Natural killer cell (primary cell): ENCODE measurements at regions of chr22 and their contacts with region 1.

Region 1: GRCh38 chr22:40243891-40244290 is 66.2 kb downstream of the TNRC6B start:
- DNase-seq: peak in 1 of 2 donors; percentile 64
- ATAC-seq: no peak
- H3K4me3 ChIP-seq: no peak overlapping the region
- H3K4me3 Mint-ChIP-seq: peak overlapping the region; percentile 81
- H3K27ac ChIP-seq: no peak overlapping the region
- H3K27ac Mint-ChIP-seq: peak overlapping the region in 1 of 2 donors; percentile 73
- H3K4me1 ChIP-seq: peaks cover 65% of the 10 kb centered on the region
- H3K4me1 Mint-ChIP-seq: peaks cover 65 to 84% of the 10 kb centered on the region in 2 donors
- H3K27me3 ChIP-seq: no peaks in the 10 kb centered on the region
- H3K27me3 Mint-ChIP-seq: no peaks in the 10 kb centered on the region
- CTCF ChIP-seq: no peak

Region 2: GRCh38 chr22:39994566-39995392 is 249.1 kb before region 1 on chr22 and contains the start of gene FAM83F:
- intact Hi-C with region 1: no loop called
- DNase-seq: peak; percentile 25 to 59
- ATAC-seq: peak; percentile 69 to 78 (median 74)
- H3K4me3 ChIP-seq: no peak within 1 kb of the TSS
- H3K4me3 Mint-ChIP-seq: peak within 1 kb of the TSS; percentile 43
- H3K27ac ChIP-seq: no peak within 1 kb of the TSS
- H3K27ac Mint-ChIP-seq: peak within 1 kb of the TSS in 1 of 2 donors; percentile 27
- H3K4me1 ChIP-seq: peaks cover 9% of the 10 kb centered on the region
- H3K4me1 Mint-ChIP-seq: peaks cover 7 to 9% of the 10 kb centered on the region in 2 donors
- H3K27me3 ChIP-seq: peaks cover 12% of the 10 kb centered on the region
- H3K27me3 Mint-ChIP-seq: peaks cover 28 to 48% of the 10 kb centered on the region in 2 donors
- CTCF ChIP-seq: no peak
- total RNA-seq, gene FAM83F: 1.0 to 7.5 TPM in 2 of 3 donors, not detected in the other

Region 3: GRCh38 chr22:40044102-40044869 is 199.6 kb before region 1 on chr22:
- intact Hi-C with region 1: loop called (anchors 5 kb)
- DNase-seq: peak; percentile 98 to 99
- ATAC-seq: peak; percentile 82 to 92 (median 85)
- H3K4me3 ChIP-seq: peak overlapping the region; percentile 59
- H3K4me3 Mint-ChIP-seq: peak overlapping the region; percentile 97
- H3K27ac ChIP-seq: peak overlapping the region; percentile 87
- H3K27ac Mint-ChIP-seq: peak overlapping the region; percentile 97 to 99
- H3K4me1 ChIP-seq: peaks cover 21% of the 10 kb centered on the region
- H3K4me1 Mint-ChIP-seq: peaks cover 35 to 36% of the 10 kb centered on the region in 2 donors
- H3K27me3 ChIP-seq: no peaks in the 10 kb centered on the region
- H3K27me3 Mint-ChIP-seq: peaks cover 9 to 13% of the 10 kb centered on the region in 2 donors
- CTCF ChIP-seq: no peak

Region 4: GRCh38 chr22:40084246-40084645 is 159.6 kb before region 1 on chr22:
- intact Hi-C with region 1: no loop called
- DNase-seq: no peak
- ATAC-seq: no peak
- H3K4me3 ChIP-seq: no peak overlapping the region
- H3K4me3 Mint-ChIP-seq: no peak overlapping the region
- H3K27ac ChIP-seq: no peak overlapping the region
- H3K27ac Mint-ChIP-seq: no peak overlapping the region
- H3K4me1 ChIP-seq: peaks cover 17% of the 10 kb centered on the region
- H3K4me1 Mint-ChIP-seq: peaks cover 15 to 24% of the 10 kb centered on the region in 2 donors
- H3K27me3 ChIP-seq: no peaks in the 10 kb centered on the region
- H3K27me3 Mint-ChIP-seq: no peaks in the 10 kb centered on the region
- CTCF ChIP-seq: no peak

Region 5: DNA sequence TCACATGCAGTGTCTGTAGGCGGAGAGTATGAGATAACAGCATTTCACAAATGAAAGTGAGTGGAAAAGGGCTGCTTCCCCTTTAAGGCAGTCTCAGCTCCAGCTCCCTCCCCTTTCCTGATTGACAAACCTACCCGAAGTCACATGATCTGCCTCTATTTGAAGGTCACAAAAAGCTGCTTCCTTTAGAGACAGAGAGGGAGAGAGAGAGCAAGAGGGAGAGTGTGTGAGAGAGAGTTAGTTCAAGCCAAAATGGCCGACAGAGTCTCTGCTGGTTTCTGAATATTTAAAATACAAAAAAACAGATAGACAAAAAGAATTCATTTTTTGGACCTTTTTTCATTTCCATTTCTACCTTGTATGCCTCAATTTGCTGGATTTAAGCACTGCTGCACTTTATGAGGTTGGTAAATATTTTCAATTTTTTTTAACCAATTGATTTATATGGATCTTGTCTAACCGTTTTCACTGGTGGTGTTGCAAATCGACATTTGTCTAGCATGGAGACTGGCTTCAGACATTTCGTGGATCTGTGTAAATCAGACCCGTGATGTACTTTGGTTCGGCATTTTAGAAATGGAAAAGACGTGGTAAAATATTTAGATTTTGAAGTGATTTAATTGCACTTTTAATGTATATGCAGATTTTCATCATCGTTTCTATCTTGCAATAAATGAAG is 66.0 kb before region 1 on chr22 and contains the start of gene TNRC6B:
- intact Hi-C with region 1: loop called (anchors 1 kb)
- DNase-seq: peak; percentile 42 to 95
- ATAC-seq: peak; percentile 88 to 96 (median 96)
- H3K4me3 ChIP-seq: peak within 1 kb of the TSS; percentile 53
- H3K4me3 Mint-ChIP-seq: peak within 1 kb of the TSS; percentile 97
- H3K27ac ChIP-seq: peak within 1 kb of the TSS; percentile 65
- H3K27ac Mint-ChIP-seq: peak within 1 kb of the TSS; percentile 88 to 91
- H3K4me1 ChIP-seq: peaks cover 32% of the 10 kb centered on the region
- H3K4me1 Mint-ChIP-seq: peaks cover 55 to 59% of the 10 kb centered on the region in 2 donors
- H3K27me3 ChIP-seq: no peaks in the 10 kb centered on the region
- H3K27me3 Mint-ChIP-seq: no peaks in the 10 kb centered on the region
- CTCF ChIP-seq: no peak
- total RNA-seq, gene TNRC6B: 112 to 141 (median 138) TPM

Region 6: DNA sequence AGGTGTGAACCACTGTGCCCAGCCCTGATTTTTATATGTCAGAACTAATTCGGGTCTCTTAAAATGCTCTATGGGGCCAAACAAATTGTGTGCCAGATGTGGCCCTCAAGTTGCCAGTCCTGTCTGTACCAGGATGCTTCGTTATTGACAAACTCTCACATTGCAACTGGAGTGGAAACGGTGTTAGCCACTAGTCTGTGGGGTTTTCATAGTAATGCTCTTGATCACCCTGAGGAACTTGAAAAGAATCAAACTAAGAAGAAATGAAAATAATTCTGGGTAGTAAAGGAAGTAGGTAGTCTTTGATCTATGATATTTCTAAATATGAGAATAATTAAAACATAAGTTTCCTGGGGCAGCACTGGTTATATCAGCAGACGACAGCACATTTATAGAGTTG is 35.1 kb after region 1 on chr22:
- intact Hi-C with region 1: no loop called
- DNase-seq: no peak
- ATAC-seq: no peak
- H3K4me3 ChIP-seq: no peak overlapping the region
- H3K4me3 Mint-ChIP-seq: no peak overlapping the region
- H3K27ac ChIP-seq: no peak overlapping the region
- H3K27ac Mint-ChIP-seq: peak overlapping the region; percentile 50 to 52
- H3K4me1 ChIP-seq: peaks cover 10% of the 10 kb centered on the region
- H3K4me1 Mint-ChIP-seq: peaks cover 15% of the 10 kb centered on the region in 2 donors
- H3K27me3 ChIP-seq: no peaks in the 10 kb centered on the region
- H3K27me3 Mint-ChIP-seq: no peaks in the 10 kb centered on the region
- CTCF ChIP-seq: no peak

Region 7: GRCh38 chr22:40289991-40290459 is 46.1 kb after region 1 on chr22:
- intact Hi-C with region 1: loop called (anchors 1 kb)
- DNase-seq: peak; percentile 60 to 91
- ATAC-seq: peak; percentile 87 to 93 (median 90)
- H3K4me3 ChIP-seq: no peak overlapping the region
- H3K4me3 Mint-ChIP-seq: peak overlapping the region; percentile 75
- H3K27ac ChIP-seq: peak overlapping the region; percentile 81
- H3K27ac Mint-ChIP-seq: peak overlapping the region; percentile 91 to 93
- H3K4me1 ChIP-seq: peaks cover 24% of the 10 kb centered on the region
- H3K4me1 Mint-ChIP-seq: peaks cover 24 to 31% of the 10 kb centered on the region in 2 donors
- H3K27me3 ChIP-seq: no peaks in the 10 kb centered on the region
- H3K27me3 Mint-ChIP-seq: no peaks in the 10 kb centered on the region
- CTCF ChIP-seq: no peak

Region 8: DNA sequence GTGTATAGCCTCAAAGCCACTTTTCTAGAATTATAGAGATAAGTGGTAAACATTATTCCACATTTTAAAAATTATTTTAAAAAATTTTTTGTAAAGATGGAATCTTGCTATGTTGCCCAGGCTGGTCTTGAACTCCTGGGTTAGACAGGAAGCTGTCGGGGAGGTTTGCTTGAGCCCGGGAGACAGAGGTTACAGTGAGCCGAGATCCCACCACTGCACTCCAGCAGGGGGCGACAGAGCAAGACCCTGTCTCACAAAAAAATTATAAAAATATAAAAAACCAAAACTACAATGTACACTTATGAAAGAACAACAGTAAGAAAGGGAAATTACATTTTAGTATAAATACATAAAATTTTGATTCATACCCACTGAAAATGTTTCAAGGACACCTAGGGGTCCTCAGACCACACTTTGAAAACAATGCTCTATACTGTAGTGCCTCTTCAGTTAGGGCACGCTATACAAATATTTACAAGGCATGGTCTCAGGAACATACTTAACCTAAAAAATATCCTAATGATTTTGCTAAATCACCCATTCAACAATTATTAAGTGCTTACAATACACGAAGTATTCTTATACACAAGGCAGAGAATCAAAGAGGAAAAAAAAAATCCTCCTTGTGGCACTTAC is 281.5 kb after region 1 on chr22:
- intact Hi-C with region 1: no loop called
- DNase-seq: peak; percentile 56 to 86
- ATAC-seq: peak; percentile 64 to 79 (median 73)
- H3K4me3 ChIP-seq: no peak overlapping the region
- H3K4me3 Mint-ChIP-seq: no peak overlapping the region
- H3K27ac ChIP-seq: no peak overlapping the region
- H3K27ac Mint-ChIP-seq: peak overlapping the region in 1 of 2 donors; percentile 8
- H3K4me1 ChIP-seq: no peaks in the 10 kb centered on the region
- H3K4me1 Mint-ChIP-seq: peaks cover 0 to 22% of the 10 kb centered on the region in 2 donors
- H3K27me3 ChIP-seq: no peaks in the 10 kb centered on the region
- H3K27me3 Mint-ChIP-seq: no peaks in the 10 kb centered on the region
- CTCF ChIP-seq: peak; percentile 80